ENCODE measurements at regions of chr6 and their contacts with region 1.

Region 1: DNA sequence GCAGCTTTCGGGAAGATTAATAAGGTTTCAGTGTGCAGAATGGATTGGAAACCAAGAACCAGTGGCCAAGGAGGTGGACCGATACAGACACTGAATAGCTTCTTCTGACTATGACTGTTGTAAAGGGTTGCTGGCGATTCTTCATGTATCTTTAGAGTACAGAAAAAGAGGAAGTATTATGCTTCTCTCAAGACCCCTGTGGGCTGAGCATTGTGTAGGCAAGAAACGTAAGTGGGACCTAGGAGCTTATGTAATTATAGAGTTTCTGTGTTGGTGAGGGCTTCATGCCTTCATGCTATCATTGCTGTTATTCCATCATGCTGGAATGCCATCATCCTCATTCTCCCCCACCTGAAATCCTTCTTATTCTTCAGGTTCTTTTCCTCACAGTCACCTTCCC is 105.4 kb upstream of the AKIRIN2 start:
- DNase-seq: no peak
- ATAC-seq: peak; percentile 80
- H3K4me3 Mint-ChIP-seq: no peak overlapping the region
- H3K27ac Mint-ChIP-seq: no peak overlapping the region
- H3K4me1 Mint-ChIP-seq: peaks cover 26% of the 10 kb centered on the region
- H3K27me3 Mint-ChIP-seq: no peaks in the 10 kb centered on the region
- CTCF ChIP-seq: no peak

Region 2: DNA sequence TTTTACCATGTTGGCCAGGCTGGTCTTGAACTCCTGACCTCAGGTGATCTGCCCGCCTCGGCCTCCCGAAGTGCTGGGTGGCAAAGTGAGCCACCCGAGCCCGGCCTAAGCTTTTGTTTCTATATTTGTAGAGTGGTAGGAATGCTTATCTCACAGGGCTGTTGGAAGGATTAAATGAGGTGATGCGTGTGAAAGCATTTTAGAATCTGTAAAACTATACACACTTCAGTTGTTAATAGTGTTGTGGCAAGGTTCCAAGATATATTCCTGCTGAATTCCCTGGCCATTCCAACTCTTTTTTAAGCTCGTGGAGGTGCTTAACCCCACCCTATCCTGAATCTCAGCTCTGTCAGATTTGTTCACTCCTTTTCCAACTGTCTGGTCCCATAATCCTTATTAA is 15.5 kb before region 1 on chr6:
- CTCF ChIA-PET with region 1: interaction called, 3 read pairs
- POLR2A ChIA-PET with region 1: no interaction called
- intact Hi-C with region 1: loop called (anchors 2 kb)
- DNase-seq: no peak
- ATAC-seq: no peak
- H3K4me3 Mint-ChIP-seq: no peak overlapping the region
- H3K27ac Mint-ChIP-seq: no peak overlapping the region
- H3K4me1 Mint-ChIP-seq: peaks cover 42% of the 10 kb centered on the region
- H3K27me3 Mint-ChIP-seq: no peaks in the 10 kb centered on the region
- CTCF ChIP-seq: no peak

Measured in activated B cell treated with CpG ODN at 0.5 μM for 24 hours (primary cell).